ENCODE measurements at regions of chr1 and their contacts with region 1.

Region 1: DNA sequence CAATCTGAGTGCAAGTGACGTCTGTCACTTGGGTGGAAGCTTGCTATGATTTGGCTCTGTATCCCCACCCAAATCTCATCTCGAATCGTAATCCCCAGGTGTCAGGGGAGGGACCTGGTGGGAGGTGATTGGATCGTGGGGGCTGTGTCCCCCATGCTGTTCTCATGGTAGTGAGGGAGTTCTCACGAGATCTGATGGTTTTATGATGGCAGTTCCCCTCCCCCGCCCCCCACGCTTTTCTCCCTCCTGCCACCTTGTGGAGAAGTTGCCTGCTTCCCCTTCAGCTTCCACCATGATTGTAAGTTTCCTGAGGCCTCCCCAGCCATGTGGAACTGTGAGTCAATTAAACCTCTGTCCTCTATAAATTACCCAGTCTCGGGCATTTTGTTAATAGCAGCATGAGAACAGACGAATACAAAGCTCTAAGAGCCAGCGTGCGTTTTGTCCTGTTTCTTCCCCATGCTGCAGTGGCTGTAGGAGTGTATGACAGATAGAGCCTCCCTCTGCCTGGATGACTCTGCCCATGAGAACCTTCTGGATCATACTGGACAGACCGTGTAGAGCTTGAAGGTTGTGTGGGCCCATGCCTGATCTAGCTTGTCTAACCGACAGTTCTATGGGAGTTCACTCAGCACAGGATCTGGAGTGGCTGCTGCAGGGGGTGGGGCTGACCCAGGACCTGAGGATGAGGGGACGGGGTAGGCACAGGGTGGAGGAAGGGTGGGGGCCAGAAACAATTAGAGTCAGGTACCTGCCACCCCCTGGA is 139.7 kb upstream of the ERRFI1 start:
- DNase-seq: no peak
- H3K4me3 ChIP-seq: no peak overlapping the region
- H3K27ac ChIP-seq: no peak overlapping the region
- H3K27me3 ChIP-seq: no peaks in the 10 kb centered on the region
- CTCF ChIP-seq: peak; percentile 12; the same call in 1 of the 2 replicates

Region 2: GRCh38 chr1:8121261-8122170 is 44.3 kb before region 1 on chr1:
- CTCF ChIA-PET with region 1: no interaction called
- POLR2A ChIA-PET with region 1: no interaction called
- DNase-seq: peak; percentile 81
- H3K4me3 ChIP-seq: no peak overlapping the region
- H3K27ac ChIP-seq: peak overlapping the region; percentile 92
- H3K27me3 ChIP-seq: no peaks in the 10 kb centered on the region
- CTCF ChIP-seq: no peak

Region 3: GRCh38 chr1:8259498-8260290 is 93.9 kb after region 1 on chr1:
- CTCF ChIA-PET with region 1: no interaction called
- POLR2A ChIA-PET with region 1: interaction called, 10 read pairs
- DNase-seq: peak; percentile 49
- H3K4me3 ChIP-seq: peak overlapping the region; percentile 23; the same call in 1 of the 2 replicates
- H3K27ac ChIP-seq: peak overlapping the region; percentile 58
- H3K27me3 ChIP-seq: no peaks in the 10 kb centered on the region
- CTCF ChIP-seq: no peak